Natural killer cell (primary cell): ENCODE measurements at regions of chr10 and their contacts with region 1.

Region 1: DNA sequence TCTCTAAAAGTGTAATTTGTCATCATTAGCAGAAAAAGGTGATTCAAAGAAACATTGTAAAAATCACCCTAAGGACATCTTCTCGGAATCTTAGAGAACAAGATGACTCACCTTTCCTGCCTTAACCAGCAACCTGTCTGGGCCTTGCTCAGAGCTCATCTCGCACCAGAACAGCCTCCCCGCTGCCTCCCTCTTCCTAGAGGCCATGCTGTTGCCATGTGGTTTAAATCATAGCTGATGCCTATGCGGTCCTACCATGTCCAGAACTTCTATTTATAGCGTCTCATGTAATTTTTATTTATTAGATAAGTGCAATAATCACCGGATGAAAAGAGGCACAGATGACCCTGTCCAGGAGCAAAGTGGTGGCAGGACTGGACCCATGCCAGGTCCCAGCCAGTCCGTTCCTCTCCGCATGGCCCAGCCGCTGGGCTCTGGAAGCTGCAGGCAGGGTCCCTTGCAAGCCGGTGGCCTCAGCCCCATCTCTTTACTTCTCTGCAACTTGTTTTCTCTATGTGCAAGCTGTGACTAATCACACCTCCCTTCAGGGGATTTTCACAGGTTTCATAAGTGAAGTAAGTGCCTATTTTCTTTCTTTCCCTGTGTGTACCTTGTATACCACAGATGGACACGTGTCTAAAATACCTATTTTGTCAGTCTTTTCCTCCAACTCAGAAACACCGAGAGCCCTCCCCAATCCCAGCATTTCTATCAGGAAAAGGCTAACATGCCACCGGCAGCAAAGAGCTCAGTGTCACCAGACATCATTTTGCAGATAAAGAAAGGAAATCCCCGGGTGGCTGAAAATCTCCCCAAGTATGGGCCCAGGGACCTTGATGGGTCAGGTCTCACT is 27.1 kb downstream of the KLF6 start:
- DNase-seq: peak in 1 of 2 donors; percentile 80
- ATAC-seq: peak; percentile 84 to 92 (median 89)
- H3K4me3 ChIP-seq: no peak overlapping the region
- H3K4me3 Mint-ChIP-seq: peak overlapping the region; percentile 84
- H3K27ac ChIP-seq: peak overlapping the region; percentile 87
- H3K27ac Mint-ChIP-seq: peak overlapping the region; percentile 91 to 95
- H3K4me1 ChIP-seq: peaks cover 43% of the 10 kb centered on the region
- H3K4me1 Mint-ChIP-seq: peaks cover 26 to 34% of the 10 kb centered on the region in 2 donors
- H3K27me3 ChIP-seq: no peaks in the 10 kb centered on the region
- H3K27me3 Mint-ChIP-seq: no peaks in the 10 kb centered on the region
- CTCF ChIP-seq: no peak

Region 2: DNA sequence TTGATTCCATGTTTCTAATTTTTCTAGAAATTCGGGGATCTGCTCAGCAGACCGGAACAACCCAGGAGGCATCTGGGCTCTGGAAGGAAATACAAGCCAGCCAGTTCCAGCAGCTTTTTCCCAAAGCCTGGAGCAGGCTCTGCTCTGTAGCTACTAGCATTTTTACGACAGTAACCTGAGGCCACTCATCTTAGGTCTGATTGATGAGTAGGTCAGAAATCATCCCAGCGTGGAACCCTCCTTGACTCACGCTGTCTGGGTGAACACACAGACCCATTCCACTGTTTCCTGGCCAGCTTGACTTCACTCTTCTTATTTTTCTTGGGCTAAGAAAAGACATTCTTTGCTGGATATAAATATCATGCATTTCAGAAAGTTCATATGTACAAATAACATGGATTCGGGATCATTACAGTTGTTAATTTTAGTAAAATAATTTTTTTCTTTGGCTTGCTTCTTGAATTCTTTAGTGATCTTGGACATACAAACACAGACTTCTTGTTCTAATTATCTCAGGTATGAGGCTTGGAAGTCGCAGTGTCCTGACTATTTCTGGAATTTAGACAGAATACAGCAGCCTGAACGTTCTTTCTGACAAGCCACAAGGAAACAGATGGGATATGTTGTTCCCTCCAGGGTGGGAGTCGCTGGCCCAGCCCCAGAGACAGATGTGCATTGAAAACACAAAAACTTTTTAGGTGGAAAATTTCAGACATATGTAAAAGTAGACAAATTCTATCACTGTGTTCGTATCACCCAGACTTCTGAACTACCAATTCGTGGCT is 530.7 kb before region 1 on chr10:
- intact Hi-C with region 1: loop called (anchors 5 kb)
- DNase-seq: no peak
- ATAC-seq: peak in 2 of 3 donors; percentile 1 to 7
- H3K4me3 ChIP-seq: no peak overlapping the region
- H3K4me3 Mint-ChIP-seq: peak overlapping the region; percentile 49
- H3K27ac ChIP-seq: no peak overlapping the region
- H3K27ac Mint-ChIP-seq: peak overlapping the region; percentile 69 to 90
- H3K4me1 ChIP-seq: peaks cover 21% of the 10 kb centered on the region
- H3K4me1 Mint-ChIP-seq: no peaks in the 10 kb centered on the region
- H3K27me3 ChIP-seq: no peaks in the 10 kb centered on the region
- H3K27me3 Mint-ChIP-seq: peaks cover 7 to 14% of the 10 kb centered on the region in 2 donors
- CTCF ChIP-seq: no peak

Region 3: DNA sequence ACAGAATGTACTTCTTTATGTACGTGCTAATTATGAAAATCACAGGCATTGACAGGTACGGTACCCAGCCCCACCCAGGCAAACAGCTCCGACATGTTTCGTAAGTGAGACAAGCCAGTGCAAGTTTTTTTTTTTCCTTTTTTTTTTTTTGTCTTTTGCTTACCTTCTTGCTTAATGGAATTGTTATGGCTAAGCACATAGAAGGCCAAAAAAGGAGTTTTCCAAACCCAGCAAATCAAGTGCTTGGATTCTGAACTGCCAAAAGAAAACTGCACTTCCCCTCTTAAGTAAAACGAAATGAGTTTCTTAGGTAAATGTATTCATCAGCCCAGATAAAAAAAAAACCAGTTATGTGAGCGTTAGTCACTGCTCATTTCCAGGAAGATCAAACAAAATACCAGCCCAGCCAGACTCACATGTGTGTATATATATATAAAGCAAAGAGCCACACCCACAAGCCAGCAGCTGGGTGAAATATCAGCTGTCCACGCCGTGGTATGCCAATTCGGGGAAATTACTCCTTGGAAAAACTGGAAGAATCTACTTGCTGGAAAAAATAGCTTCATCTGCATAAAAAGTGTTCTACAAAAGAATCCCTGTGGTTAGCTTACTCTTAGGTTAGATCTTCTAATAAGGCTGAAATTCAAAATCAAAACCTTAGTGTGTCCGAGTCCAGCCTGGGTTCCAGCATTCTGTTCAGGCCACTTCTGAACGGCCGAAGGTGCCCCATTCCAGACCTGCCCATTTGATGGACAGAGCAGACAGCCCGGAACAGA is 19.1 kb after region 1 on chr10:
- intact Hi-C with region 1: loop called (anchors 2 kb)
- DNase-seq: peak in 1 of 2 donors; percentile 80
- ATAC-seq: peak in 2 of 3 donors; percentile 21 to 27
- H3K4me3 ChIP-seq: no peak overlapping the region
- H3K4me3 Mint-ChIP-seq: peak overlapping the region; percentile 69
- H3K27ac ChIP-seq: peak overlapping the region; percentile 20
- H3K27ac Mint-ChIP-seq: peak overlapping the region; percentile 100
- H3K4me1 ChIP-seq: peaks cover 65% of the 10 kb centered on the region
- H3K4me1 Mint-ChIP-seq: peaks cover 72 to 86% of the 10 kb centered on the region in 2 donors
- H3K27me3 ChIP-seq: no peaks in the 10 kb centered on the region
- H3K27me3 Mint-ChIP-seq: no peaks in the 10 kb centered on the region
- CTCF ChIP-seq: no peak